AG04449 (cell line): ENCODE measurements at regions of chr19 and their contacts with region 1.

Region 1: DNA sequence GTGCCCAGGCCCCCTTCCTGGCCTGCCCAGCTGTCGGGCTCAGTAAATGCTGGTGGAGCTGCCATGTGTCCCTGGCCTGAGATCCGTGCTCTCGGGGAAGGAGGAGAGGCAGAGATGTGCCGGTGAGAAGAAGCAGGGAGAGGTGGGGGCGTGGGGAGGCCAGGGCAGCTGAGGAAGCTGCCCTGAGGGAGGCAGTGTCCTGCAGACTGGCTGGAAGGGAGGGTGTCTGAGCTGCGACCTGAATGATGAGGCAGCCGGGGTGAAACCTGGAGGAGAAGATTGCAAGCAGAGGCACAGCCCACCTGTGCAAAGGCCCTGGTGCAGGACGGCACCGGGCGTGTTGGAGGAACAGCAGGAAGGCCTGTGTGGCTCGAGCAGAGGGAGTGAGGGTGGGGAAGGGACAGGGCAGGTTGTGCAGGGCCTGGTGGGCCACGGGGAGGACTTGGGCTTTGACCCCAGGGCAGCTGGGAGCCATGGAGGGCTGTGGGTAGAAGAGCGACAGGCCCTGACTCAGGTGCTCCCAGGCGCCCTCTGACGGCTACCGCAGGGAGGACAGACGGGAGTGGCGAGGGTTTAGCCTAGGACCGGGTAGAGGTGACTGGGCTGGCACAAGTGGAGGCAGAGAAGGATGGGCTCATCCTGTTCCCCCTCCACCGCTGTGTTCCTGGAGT is 14.0 kb upstream of the CELF5 start:
- DNase-seq: no peak
- H3K4me3 ChIP-seq: no peak overlapping the region
- CTCF ChIP-seq: peak; percentile 74

Region 2: GRCh38 chr19:3224346-3225168 is 14.1 kb after region 1 on chr19 and contains the start of gene CELF5:
- CTCF ChIA-PET with region 1: interaction called, 25 read pairs
- POLR2A ChIA-PET with region 1: no interaction called
- DNase-seq: no peak
- H3K4me3 ChIP-seq: peak within 1 kb of the TSS; percentile 30
- CTCF ChIP-seq: peak; percentile 20